Right ventricle myocardium superior (tissue), 1 donor: ENCODE measurements at regions of chr1 and their contacts with region 1.

Region 1: DNA sequence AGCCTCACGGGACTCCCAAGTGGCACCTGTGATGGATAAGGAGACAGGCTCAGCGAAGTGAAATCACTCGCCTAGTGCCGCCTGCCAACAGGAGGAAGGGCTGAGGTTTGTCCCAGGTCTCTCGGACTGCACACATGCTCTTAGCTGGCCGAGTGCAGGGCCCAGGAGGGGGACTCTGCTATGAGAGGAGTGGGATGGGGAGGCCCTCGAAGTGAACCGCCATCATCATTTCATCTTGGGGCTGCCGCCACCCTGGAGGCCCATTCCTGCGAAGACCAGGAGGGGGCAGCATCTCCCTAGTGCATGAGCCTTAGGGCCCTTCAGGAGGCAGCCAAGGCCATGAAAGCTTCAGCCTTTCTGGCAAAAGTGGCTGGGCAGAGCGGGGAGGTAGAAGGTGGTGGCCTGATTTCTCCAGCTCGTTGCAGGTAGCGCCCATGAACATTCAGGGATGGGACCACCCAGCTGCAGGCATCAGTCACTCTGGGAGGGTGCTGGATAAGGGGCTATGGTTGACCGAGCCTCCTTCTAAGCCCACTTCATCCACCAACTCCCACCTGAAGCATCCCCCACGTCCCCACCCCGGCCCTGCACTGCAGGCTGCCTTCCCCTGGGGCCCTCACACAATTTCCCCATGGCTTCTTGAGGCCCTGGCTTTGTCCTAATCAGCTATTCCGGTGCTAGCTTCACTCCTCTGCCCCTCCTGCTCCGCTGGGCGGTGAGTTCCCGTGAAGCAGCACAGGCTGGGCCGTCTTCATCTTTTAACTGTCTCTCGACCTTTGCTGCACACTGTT is 17.2 kb upstream of the RASSF5 start:
- DNase-seq: peak; percentile 84
- ATAC-seq: peak; percentile 93

Region 2: DNA sequence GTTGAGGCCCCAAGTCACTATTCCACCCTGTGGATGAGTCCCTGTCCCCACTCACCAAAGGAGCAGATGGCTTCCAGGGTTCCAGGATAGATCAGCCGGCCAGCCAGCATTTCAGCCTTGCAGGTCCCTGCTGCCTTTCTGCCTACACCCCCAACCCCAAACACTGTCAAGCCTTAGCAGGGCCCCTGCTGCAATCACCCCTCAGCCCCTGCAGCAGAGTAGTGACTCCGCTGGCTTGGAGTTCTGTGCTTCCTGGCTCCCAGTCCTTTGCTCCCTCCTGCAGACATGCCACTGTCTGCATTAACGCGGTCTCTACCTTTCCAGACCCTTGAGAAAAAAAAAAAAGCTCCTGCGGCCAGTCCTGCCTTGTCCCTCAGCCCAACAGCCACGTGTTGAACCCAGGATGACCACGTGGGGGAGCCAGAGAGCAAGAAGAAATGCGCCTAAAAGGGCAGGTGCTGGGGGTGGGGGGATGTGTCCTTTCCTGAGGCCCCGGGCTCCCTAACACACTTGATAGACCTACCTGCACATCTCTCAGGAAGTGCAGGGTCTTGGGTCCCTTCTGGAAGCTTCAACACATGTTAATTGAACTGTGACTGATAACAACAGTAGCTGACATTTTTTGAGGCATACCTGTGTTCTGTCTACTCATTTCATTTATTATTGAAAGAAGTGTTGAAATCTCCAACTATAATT is 54.5 kb after region 1 on chr1:
- intact Hi-C with region 1: loop called (anchors 2 kb)
- DNase-seq: peak; percentile 81
- ATAC-seq: peak; percentile 84

Region 3: DNA sequence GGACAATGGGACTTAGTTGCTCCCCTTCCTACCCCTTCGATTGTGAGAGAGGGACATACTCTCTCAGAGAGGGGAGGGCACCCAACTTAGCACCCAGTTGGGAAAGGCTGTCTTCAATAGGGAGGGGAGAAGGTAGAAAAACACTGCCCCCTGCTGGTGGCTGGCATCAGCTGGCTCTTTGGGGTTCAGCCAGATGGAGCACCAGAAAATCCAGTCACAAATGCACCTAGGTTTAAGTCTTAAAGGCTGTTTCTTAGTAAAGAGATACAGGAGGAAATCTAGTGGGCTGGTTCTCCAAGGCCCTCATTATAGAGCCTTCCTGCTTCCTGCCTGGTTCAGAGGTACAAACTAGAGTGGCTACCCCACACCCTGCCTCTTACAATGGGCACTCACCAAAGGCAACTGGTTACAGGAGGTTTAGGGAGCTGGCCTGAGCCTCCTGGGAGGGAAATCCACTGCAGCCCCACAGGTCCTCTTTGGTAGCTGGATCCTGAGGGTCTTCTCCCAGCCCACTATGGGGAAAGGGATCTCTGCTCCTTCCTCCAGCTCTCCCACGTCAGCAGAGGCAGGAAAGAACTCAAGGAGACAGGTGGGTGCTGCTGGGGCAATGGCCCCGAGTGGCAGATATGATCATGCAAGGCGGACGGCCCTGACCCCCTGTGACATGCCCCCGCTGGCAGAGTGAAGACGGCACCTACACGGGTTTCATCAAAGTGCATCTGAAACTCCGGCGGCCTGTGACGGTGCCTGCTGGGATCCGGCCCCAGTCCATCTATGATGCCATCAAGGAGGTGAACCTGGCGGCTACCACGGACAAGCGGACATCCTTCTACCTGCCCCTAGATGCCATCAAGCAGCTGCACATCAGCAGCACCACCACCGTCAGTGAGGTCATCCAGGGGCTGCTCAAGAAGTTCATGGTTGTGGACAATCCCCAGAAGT is 93.8 kb after region 1 on chr1:
- intact Hi-C with region 1: loop called (anchors 2 kb)
- DNase-seq: peak; percentile 84
- ATAC-seq: peak; percentile 62